IMR-90 (cell line): ENCODE measurements at regions of chr11 and their contacts with region 1.

Region 1: GRCh38 chr11:61871158-61871597 is 20.2 kb downstream of the FADS3 start:
- DNase-seq: peak; percentile 67
- ATAC-seq: peak; percentile 98
- H3K4me3 ChIP-seq: no peak overlapping the region
- H3K27ac ChIP-seq: no peak overlapping the region
- H3K4me1 ChIP-seq: peaks cover 2% of the 10 kb centered on the region
- H3K27me3 ChIP-seq: no peaks in the 10 kb centered on the region
- CTCF ChIP-seq: peak; percentile 96
- POLR2A ChIP-seq: no peak
- RAD21 ChIP-seq: peak; percentile 94

Region 2: GRCh38 chr11:61413496-61413895 is 457.7 kb before region 1 on chr11:
- CTCF ChIA-PET with region 1: no interaction called
- POLR2A ChIA-PET with region 1: no interaction called
- dilution Hi-C with region 1: no loop called
- in situ Hi-C with region 1: no loop called
- intact Hi-C with region 1: no loop called
- DNase-seq: peak; percentile 41
- ATAC-seq: peak; percentile 22; the same call in 1 of the 2 replicates
- H3K4me3 ChIP-seq: no peak overlapping the region
- H3K27ac ChIP-seq: no peak overlapping the region
- H3K4me1 ChIP-seq: no peaks in the 10 kb centered on the region
- H3K27me3 ChIP-seq: no peaks in the 10 kb centered on the region
- CTCF ChIP-seq: no peak
- POLR2A ChIP-seq: no peak
- RAD21 ChIP-seq: no peak

Region 3: GRCh38 chr11:61816736-61817455 is 54.3 kb before region 1 on chr11 and contains the start of gene FADS1:
- CTCF ChIA-PET with region 1: no interaction called
- POLR2A ChIA-PET with region 1: no interaction called
- dilution Hi-C with region 1: no loop called
- in situ Hi-C with region 1: no loop called
- intact Hi-C with region 1: no loop called
- DNase-seq: peak; percentile 92
- ATAC-seq: peak; percentile 70
- H3K4me3 ChIP-seq: peak within 1 kb of the TSS; percentile 86
- H3K27ac ChIP-seq: peak within 1 kb of the TSS; percentile 92
- H3K4me1 ChIP-seq: peaks cover 5% of the 10 kb centered on the region; the same call in 1 of the 2 replicates
- H3K27me3 ChIP-seq: no peaks in the 10 kb centered on the region
- CTCF ChIP-seq: peak; percentile 81
- POLR2A ChIP-seq: 0 out of 2 replicates have a peak, but pooled peaks have one; percentile 15
- RAD21 ChIP-seq: peak; percentile 40
- total RNA-seq, gene FADS1: 16.3 and 16.9 TPM in 2 replicates

Region 4: DNA sequence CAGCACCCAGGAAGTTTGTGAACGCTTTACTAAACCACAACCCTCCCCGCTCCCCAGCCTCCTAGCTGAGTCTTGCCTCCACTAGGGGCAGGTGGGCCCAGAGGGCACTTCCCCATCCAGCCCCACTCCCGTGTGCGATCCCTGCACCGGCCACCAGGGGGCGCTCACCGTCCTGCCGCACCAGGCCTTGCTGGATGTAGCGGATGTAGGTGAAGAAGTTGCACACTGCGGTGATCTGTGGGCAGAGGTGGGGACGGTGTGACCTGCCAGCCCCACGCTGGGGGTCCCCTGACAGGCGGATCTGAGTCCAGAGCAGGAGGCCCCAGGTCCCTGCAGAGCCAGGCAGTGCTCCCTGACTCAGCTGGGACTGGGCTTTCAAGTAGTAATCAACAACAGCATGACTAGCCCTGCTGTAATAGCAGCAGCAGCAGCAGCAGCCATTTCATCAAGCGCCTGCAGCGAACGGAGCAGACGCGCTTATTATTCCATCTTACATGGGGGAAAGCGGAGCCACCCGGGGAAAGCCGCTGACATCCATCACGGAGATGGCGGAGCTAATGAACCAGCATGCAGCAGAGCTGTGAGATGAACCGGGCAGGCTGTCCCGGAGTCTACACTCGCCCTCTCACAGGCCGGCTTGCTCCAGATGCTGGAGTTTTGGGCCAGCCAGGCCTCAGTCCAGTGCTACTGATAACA is 28.1 kb after region 1 on chr11:
- CTCF ChIA-PET with region 1: interaction called, 3 read pairs
- POLR2A ChIA-PET with region 1: no interaction called
- dilution Hi-C with region 1: no loop called
- in situ Hi-C with region 1: no loop called
- intact Hi-C with region 1: loop called (anchors 2 kb)
- DNase-seq: peak; percentile 54
- ATAC-seq: peak; percentile 89
- H3K4me3 ChIP-seq: no peak overlapping the region
- H3K27ac ChIP-seq: no peak overlapping the region
- H3K4me1 ChIP-seq: no peaks in the 10 kb centered on the region
- H3K27me3 ChIP-seq: no peaks in the 10 kb centered on the region
- CTCF ChIP-seq: peak; percentile 98
- POLR2A ChIP-seq: no peak
- RAD21 ChIP-seq: peak; percentile 86

Region 5: GRCh38 chr11:62025487-62026105 is 154.4 kb after region 1 on chr11:
- CTCF ChIA-PET with region 1: no interaction called
- POLR2A ChIA-PET with region 1: no interaction called
- dilution Hi-C with region 1: no loop called
- in situ Hi-C with region 1: no loop called
- intact Hi-C with region 1: no loop called
- DNase-seq: peak; percentile 91
- ATAC-seq: peak; percentile 94
- H3K4me3 ChIP-seq: no peak overlapping the region
- H3K27ac ChIP-seq: peak overlapping the region; percentile 62
- H3K4me1 ChIP-seq: peaks cover 6% of the 10 kb centered on the region; the same call in 1 of the 2 replicates
- H3K27me3 ChIP-seq: peaks cover 2% of the 10 kb centered on the region; the same call in 1 of the 2 replicates
- CTCF ChIP-seq: no peak
- POLR2A ChIP-seq: no peak
- RAD21 ChIP-seq: no peak

Region 6: DNA sequence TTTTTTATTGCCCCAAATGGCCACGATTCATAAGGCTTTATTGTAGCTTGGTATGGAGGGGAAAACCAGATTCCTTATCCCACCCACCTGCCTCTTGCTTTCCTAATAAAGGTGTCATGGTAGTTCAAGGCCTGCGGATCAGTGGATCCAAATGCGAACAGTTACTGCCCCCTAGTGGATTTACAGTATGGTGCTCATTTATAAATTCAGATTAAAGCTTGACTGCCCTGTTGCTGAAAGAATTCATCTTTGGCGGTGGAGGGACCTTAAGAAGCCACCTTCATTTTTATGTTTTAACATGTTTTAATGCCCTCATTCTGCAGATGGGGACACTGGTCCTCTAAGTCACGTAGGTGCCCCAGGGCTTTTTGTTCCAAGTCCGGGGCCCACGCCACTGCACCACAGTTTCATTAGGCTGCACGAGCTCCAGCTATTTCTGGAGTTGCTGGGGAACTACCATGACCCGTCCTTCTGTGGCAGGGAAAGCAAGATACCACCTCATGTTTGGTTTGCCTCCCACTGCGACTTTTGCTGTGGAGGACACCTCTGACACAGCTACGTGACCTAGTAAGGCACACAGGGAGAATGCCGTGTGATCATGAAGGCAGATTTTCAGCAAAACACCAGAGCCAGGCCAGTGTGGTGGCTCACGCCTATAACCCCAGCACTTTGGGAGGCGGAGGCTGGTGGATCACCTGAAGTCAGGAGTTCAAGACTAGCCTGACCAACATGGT is 237.0 kb after region 1 on chr11:
- CTCF ChIA-PET with region 1: interaction called, 8 read pairs
- POLR2A ChIA-PET with region 1: interaction called, 4 read pairs
- dilution Hi-C with region 1: no loop called
- in situ Hi-C with region 1: no loop called
- intact Hi-C with region 1: loop called (anchors 1 kb)
- DNase-seq: peak; percentile 74
- ATAC-seq: peak; percentile 30
- H3K4me3 ChIP-seq: no peak overlapping the region
- H3K27ac ChIP-seq: no peak overlapping the region
- H3K4me1 ChIP-seq: peaks cover 12% of the 10 kb centered on the region
- H3K27me3 ChIP-seq: no peaks in the 10 kb centered on the region
- CTCF ChIP-seq: peak; percentile 91
- POLR2A ChIP-seq: no peak
- RAD21 ChIP-seq: peak; percentile 87

Region 7: GRCh38 chr11:62324738-62325556 is 453.8 kb after region 1 on chr11:
- CTCF ChIA-PET with region 1: no interaction called
- POLR2A ChIA-PET with region 1: no interaction called
- dilution Hi-C with region 1: no loop called
- in situ Hi-C with region 1: loop called (anchors 25 kb)
- intact Hi-C with region 1: no loop called
- DNase-seq: peak; percentile 18
- ATAC-seq: peak; percentile 63
- H3K4me3 ChIP-seq: no peak overlapping the region
- H3K27ac ChIP-seq: no peak overlapping the region
- H3K4me1 ChIP-seq: no peaks in the 10 kb centered on the region
- H3K27me3 ChIP-seq: peaks cover 17% of the 10 kb centered on the region
- CTCF ChIP-seq: peak; percentile 65
- POLR2A ChIP-seq: no peak
- RAD21 ChIP-seq: peak; percentile 53

Region 8: DNA sequence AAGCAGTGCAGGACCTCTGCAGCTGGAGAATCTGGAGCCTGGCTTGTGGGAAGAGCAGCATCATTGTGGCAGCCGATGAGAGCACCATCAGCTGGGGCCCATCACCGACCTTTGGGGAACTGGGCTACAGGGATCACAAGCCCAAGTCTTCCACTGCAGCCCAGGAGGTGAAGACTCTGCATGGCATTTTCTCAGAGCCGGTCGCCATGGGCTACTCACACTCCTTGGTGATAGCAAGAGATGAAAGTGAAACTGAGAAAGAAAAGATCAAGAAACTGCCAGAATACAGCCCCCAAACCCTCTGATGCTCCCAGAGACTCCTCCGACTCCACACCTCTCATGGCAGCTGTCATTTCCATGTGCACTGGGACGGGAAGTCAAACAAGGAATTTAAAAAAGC is 501.7 kb after region 1 on chr11:
- CTCF ChIA-PET with region 1: no interaction called
- POLR2A ChIA-PET with region 1: no interaction called
- dilution Hi-C with region 1: no loop called
- in situ Hi-C with region 1: no loop called
- intact Hi-C with region 1: loop called (anchors 5 kb)
- DNase-seq: no peak
- ATAC-seq: no peak
- H3K4me3 ChIP-seq: no peak overlapping the region
- H3K27ac ChIP-seq: no peak overlapping the region
- H3K4me1 ChIP-seq: no peaks in the 10 kb centered on the region
- H3K27me3 ChIP-seq: peaks cover 14% of the 10 kb centered on the region
- CTCF ChIP-seq: no peak
- POLR2A ChIP-seq: no peak
- RAD21 ChIP-seq: no peak